HepG2 (cell line): ENCODE measurements at regions of chr9 and their contacts with region 1.

Region 1: DNA sequence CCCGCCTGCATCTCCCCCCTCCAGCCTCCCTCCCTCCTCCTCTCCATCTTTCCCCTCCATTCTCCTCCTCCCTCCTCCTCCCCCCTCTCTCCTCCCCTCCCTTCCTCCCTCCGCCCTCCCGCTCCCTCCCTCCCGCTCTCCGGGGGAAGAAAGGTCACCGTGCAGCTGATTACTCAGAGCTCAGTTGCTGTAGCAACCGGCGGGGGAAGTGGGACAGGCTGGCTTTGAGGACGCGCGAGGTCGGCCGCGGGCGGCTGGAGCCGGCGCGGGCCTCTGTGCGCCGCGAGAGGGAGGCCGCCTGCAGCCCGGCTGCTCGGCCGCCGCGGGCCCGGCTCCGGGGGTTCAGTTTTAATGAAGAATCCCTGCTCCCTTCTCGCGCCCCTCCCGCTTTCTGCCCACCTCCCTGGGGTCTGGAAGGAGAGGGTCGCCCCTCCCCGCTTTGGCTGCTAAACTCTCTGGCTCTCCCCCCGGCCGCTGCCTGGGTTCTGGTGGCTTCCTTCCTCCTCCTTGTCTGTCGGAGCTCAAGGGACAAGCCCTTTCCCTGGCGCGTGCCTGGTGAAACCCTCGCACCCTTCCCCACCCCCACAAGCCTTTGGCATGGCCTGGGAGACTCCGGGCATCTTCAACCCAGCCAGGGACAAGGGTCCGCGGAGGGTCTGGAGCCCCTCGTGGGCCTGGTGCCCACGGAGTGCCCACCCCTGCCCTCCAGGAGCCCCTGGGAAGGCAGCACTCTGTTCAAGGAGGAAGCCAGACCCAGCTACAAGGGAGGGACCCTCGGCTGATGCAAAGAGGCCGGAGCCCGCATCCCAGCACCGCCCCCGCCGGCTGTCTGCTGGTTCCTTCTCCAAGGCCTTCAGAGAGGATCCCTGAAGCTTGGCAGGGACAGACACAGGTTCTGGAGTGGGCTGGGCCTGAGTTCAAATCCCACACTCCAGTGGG is 160.3 kb downstream of the C9orf50 start:
- DNase-seq: peak; percentile 94
- ATAC-seq: peak; percentile 82
- H3K4me3 ChIP-seq: peak overlapping the region; percentile 49 to 78 (median 57)
- H3K27ac ChIP-seq: peak overlapping the region; percentile 73
- H3K4me1 ChIP-seq: peaks cover 47% of the 10 kb centered on the region
- H3K27me3 ChIP-seq: peaks cover 4 to 10% of the 10 kb centered on the region in 2 experiments; a peak in 3 of 5 replicates
- CTCF ChIP-seq: peak; percentile 18; the same call in 1 of the 2 replicates
- EP300 ChIP-seq: peak in 1 of 2 experiments; percentile 78; a peak in 3 of 4 replicates
- POLR2A ChIP-seq: peak; percentile 58 to 60; a peak in 3 of 4 replicates
- RAD21 ChIP-seq: peak; percentile 78

Region 2: GRCh38 chr9:129258124-129258822 is 202.3 kb before region 1 on chr9:
- CTCF ChIA-PET with region 1: no interaction called
- POLR2A ChIA-PET with region 1: no interaction called
- in situ Hi-C with region 1: no loop called
- intact Hi-C with region 1: no loop called
- DNase-seq: peak; percentile 61
- ATAC-seq: peak; percentile 72
- H3K4me3 ChIP-seq: no peak overlapping the region
- H3K27ac ChIP-seq: no peak overlapping the region
- H3K4me1 ChIP-seq: peaks cover 14% of the 10 kb centered on the region
- H3K27me3 ChIP-seq: peaks cover 4 to 79% of the 10 kb centered on the region in 2 experiments; a peak in 4 of 5 replicates
- CTCF ChIP-seq: no peak
- EP300 ChIP-seq: no peak
- POLR2A ChIP-seq: no peak
- RAD21 ChIP-seq: no peak

Region 3: DNA sequence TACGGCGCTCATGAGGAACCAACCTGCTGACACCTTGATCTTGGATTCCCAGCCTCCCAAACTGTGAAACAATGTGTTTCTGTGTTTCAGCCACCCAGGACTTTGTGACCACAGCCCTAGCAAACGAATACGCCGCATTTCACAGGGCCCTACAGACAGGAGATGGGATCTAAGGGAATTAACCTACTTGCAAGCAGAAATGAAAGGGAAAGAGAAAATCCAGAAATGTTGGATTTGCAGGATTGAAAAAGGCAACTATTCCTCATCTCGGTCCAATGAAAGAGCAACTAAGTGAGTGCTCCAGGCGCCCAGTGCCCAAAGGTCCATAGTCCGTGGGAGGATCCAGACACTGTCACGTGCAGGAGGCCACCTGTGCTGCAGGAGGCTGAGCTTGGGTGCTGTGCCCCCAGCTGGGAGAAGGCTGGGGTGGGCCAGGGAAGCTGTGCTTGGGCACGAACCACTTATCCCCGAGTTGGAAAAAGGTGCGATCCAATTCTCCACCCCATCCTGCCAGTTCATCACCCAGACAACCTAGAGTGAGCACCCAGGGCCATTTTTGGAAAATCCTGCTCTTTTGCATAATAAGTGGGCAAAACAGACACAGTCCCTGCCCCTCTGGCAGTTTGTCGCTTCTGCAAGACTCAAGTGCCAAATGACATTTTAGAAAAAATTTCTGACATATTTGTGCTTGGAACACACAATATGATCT is 17.6 kb before region 1 on chr9:
- CTCF ChIA-PET with region 1: no interaction called
- POLR2A ChIA-PET with region 1: interaction called, 38 read pairs
- in situ Hi-C with region 1: no loop called
- intact Hi-C with region 1: no loop called
- DNase-seq: peak; percentile 65
- ATAC-seq: peak; percentile 77
- H3K4me3 ChIP-seq: peak overlapping the region; percentile 8 to 54 (median 25); a peak in 5 of 6 replicates
- H3K27ac ChIP-seq: peak overlapping the region; percentile 32
- H3K4me1 ChIP-seq: peaks cover 56% of the 10 kb centered on the region
- H3K27me3 ChIP-seq: peaks cover 0 to 8% of the 10 kb centered on the region in 2 experiments; a peak in 3 of 5 replicates
- CTCF ChIP-seq: peak; percentile 53
- EP300 ChIP-seq: peak in 1 of 2 experiments; percentile 57; a peak in 2 of 4 replicates
- POLR2A ChIP-seq: peak in 1 of 2 experiments; percentile 29; a peak in 1 of 4 replicates
- RAD21 ChIP-seq: no peak

Region 4: GRCh38 chr9:129487642-129488409 is 27.2 kb after region 1 on chr9:
- CTCF ChIA-PET with region 1: no interaction called
- POLR2A ChIA-PET with region 1: interaction called, 53 read pairs
- in situ Hi-C with region 1: no loop called
- intact Hi-C with region 1: no loop called
- DNase-seq: no peak
- ATAC-seq: peak; percentile 14
- H3K4me3 ChIP-seq: peak overlapping the region; percentile 68 to 86 (median 72); a peak in 5 of 6 replicates
- H3K27ac ChIP-seq: peak overlapping the region; percentile 91
- H3K4me1 ChIP-seq: peaks cover 87% of the 10 kb centered on the region
- H3K27me3 ChIP-seq: no peaks in the 10 kb centered on the region; a peak in 1 of 5 replicates
- CTCF ChIP-seq: no peak
- EP300 ChIP-seq: no peak
- POLR2A ChIP-seq: peak in 1 of 2 experiments; percentile 41; a peak in 1 of 4 replicates
- RAD21 ChIP-seq: no peak; the same call in 1 of the 2 replicates

Region 5: GRCh38 chr9:129524582-129525270 is 64.1 kb after region 1 on chr9:
- CTCF ChIA-PET with region 1: no interaction called
- POLR2A ChIA-PET with region 1: no interaction called
- in situ Hi-C with region 1: no loop called
- intact Hi-C with region 1: no loop called
- DNase-seq: peak; percentile 29
- ATAC-seq: peak; percentile 87
- H3K4me3 ChIP-seq: no peak overlapping the region; a peak in 1 of 6 replicates
- H3K27ac ChIP-seq: no peak overlapping the region
- H3K4me1 ChIP-seq: peaks cover 18% of the 10 kb centered on the region
- H3K27me3 ChIP-seq: peaks cover 2 to 22% of the 10 kb centered on the region in 2 experiments; a peak in 2 of 5 replicates
- CTCF ChIP-seq: peak; percentile 53
- EP300 ChIP-seq: no peak
- POLR2A ChIP-seq: no peak
- RAD21 ChIP-seq: 0 out of 2 replicates have a peak, but pooled peaks have one; percentile 33

Region 6: GRCh38 chr9:129569502-129570449 is 109.2 kb after region 1 on chr9:
- CTCF ChIA-PET with region 1: no interaction called
- POLR2A ChIA-PET with region 1: interaction called, 10 read pairs
- in situ Hi-C with region 1: no loop called
- intact Hi-C with region 1: no loop called
- DNase-seq: peak; percentile 56
- ATAC-seq: peak; percentile 42
- H3K4me3 ChIP-seq: peak overlapping the region; percentile 38 to 61 (median 50)
- H3K27ac ChIP-seq: peak overlapping the region; percentile 80
- H3K4me1 ChIP-seq: peaks cover 70% of the 10 kb centered on the region
- H3K27me3 ChIP-seq: no peaks in the 10 kb centered on the region; a peak in 1 of 5 replicates
- CTCF ChIP-seq: peak; percentile 75
- EP300 ChIP-seq: no peak
- POLR2A ChIP-seq: no peak
- RAD21 ChIP-seq: peak; percentile 73

Region 7: DNA sequence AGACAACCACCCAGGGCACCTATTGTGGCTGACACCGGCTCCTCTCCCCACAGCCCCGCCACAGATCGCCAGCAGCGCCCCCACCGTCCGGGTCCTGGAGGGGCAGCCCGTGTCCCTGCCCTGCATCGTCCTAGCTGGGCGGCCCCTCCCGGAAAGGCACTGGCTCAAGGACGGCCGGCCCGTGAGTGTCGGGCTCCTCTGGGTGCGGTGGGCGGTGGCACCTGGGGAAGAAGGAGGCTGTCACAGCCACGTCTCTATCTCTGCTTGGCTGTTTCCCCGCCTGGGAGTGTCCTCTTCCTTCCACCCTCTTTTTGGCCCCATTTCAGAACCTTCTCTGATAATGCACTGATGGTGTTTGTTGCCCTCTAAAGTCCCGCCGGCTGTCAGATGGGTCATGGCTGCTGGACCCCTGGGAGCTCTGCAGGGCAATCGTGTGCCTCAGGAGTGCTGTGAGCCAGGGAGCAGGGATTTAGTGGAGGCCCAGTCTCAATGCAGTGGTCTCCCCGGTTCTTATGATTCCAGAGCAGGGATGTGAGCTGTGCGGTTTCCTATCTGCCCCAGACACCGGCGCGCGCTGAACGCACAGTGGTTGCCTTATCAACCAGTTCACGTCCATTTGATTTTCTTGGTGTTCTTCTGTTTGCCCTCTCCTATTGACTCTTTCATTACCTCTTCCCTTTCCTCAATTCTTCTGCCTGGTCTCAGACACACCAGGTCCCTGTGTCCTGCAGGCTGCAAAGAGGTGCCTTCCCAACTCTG is 860.3 kb after region 1 on chr9:
- CTCF ChIA-PET with region 1: no interaction called
- POLR2A ChIA-PET with region 1: no interaction called
- in situ Hi-C with region 1: no loop called
- intact Hi-C with region 1: no loop called
- DNase-seq: peak; percentile 8
- ATAC-seq: peak; percentile 78
- H3K4me3 ChIP-seq: no peak overlapping the region
- H3K27ac ChIP-seq: no peak overlapping the region
- H3K4me1 ChIP-seq: peaks cover 25% of the 10 kb centered on the region
- H3K27me3 ChIP-seq: peaks cover 2 to 34% of the 10 kb centered on the region in 2 experiments; a peak in 4 of 5 replicates
- CTCF ChIP-seq: peak; percentile 58
- EP300 ChIP-seq: no peak
- POLR2A ChIP-seq: no peak
- RAD21 ChIP-seq: no peak